PC-3 (cell line): ENCODE measurements at regions of chr22 and their contacts with region 1.

Region 1: DNA sequence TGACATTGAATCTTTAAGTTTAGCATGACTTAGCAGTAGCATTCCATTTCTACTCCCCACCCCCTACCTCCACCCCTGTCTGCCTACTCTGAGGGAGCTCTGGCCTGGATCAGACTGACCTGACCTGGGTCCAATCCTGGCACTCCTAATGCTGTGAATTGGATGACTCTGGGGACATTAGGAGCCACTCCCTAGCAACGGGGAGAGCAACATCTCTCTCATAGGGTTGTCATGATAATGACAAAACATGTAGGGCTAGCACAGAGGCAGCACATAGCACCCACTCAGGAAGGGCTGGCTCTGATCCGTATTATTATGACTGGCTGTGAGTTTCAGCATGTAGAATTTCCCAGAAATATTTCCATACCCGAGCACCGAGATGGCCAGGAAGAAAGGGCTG is 40.5 kb downstream of the CABIN1 start:
- DNase-seq: no peak
- ATAC-seq: no peak
- H3K4me3 ChIP-seq: no peak overlapping the region
- H3K27ac ChIP-seq: no peak overlapping the region
- H3K4me1 ChIP-seq: 0 out of 2 replicates have a peak, but pooled peaks cover 1% of the 10 kb centered on the region
- H3K27me3 ChIP-seq: no peaks in the 10 kb centered on the region
- CTCF ChIP-seq: no peak

Region 2: GRCh38 chr22:23938328-23939016 is 113.1 kb before region 1 on chr22:
- CTCF ChIA-PET with region 1: no interaction called
- POLR2A ChIA-PET with region 1: no interaction called
- intact Hi-C with region 1: no loop called
- DNase-seq: no peak
- ATAC-seq: no peak
- H3K4me3 ChIP-seq: no peak overlapping the region
- H3K27ac ChIP-seq: no peak overlapping the region
- H3K4me1 ChIP-seq: no peaks in the 10 kb centered on the region
- H3K27me3 ChIP-seq: no peaks in the 10 kb centered on the region
- CTCF ChIP-seq: no peak

Region 3: GRCh38 chr22:24089951-24090350 is 38.4 kb after region 1 on chr22:
- CTCF ChIA-PET with region 1: no interaction called
- POLR2A ChIA-PET with region 1: interaction called, 24 read pairs
- intact Hi-C with region 1: no loop called
- DNase-seq: no peak
- ATAC-seq: no peak
- H3K4me3 ChIP-seq: no peak overlapping the region
- H3K27ac ChIP-seq: no peak overlapping the region
- H3K4me1 ChIP-seq: no peaks in the 10 kb centered on the region
- H3K27me3 ChIP-seq: no peaks in the 10 kb centered on the region
- CTCF ChIP-seq: no peak